ENCODE measurements at regions of chr9 and their contacts with region 1.

Region 1: GRCh38 chr9:77977210-77977611 is 54.4 kb downstream of the GNAQ start:
- DNase-seq: peak in 4 of 5 donors; percentile 37 to 53 (median 48)
- H3K4me3 ChIP-seq: peak overlapping the region in 1 of 2 donors; percentile 21
- H3K4me3 Mint-ChIP-seq: peak overlapping the region in 7 of 8 donors; percentile 3 to 73 (median 62)
- H3K27ac ChIP-seq: no peak overlapping the region
- H3K27ac Mint-ChIP-seq: peak overlapping the region; percentile 1 to 92 (median 43)
- H3K4me1 ChIP-seq: peaks cover 53% of the 10 kb centered on the region
- H3K4me1 Mint-ChIP-seq: peaks cover 42 to 73% (median 58%) of the 10 kb centered on the region in 4 donors
- H3K27me3 ChIP-seq: no peaks in the 10 kb centered on the region
- H3K27me3 Mint-ChIP-seq: no peaks in the 10 kb centered on the region

Region 2: DNA sequence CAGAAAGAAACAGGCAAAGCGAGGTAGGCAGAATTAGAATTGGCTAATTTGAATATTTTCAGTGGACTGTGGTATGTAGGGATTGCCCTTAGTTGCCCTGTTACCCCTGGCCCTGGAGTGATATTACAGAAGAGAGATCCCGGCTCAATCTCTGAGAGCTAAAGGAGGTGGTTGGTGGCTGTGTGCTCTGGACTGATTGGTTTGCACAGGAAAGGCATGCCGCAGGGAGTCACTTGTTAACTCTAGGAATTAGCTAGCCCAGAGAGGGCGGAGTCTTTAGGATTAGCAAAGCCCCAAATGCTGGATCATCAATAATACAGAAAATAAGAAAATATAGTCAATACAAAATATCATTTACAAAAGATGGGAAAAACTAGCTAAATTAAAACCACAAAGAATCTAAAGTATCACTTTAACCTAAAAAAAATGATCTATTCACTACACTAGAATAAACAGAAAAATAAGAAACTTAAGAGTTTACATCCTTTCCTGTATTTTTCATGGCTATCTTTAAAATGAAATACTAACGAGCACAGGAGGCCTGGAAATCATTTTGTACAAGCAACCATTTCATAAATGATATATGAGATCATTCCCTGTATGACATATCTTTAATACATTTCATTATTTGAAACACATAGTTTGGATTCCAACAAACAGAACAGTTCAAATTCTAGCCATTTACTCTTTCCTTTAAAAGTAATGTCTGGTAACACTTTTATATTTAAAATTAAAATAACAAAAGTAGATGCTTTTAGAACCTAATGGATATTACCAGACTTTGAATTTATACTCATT is 16.7 kb before region 1 on chr9:
- CTCF ChIA-PET with region 1: interaction called, 18 read pairs
- POLR2A ChIA-PET with region 1: no interaction called
- intact Hi-C with region 1: no loop called
- DNase-seq: no peak
- H3K4me3 ChIP-seq: no peak overlapping the region
- H3K4me3 Mint-ChIP-seq: no peak overlapping the region
- H3K27ac ChIP-seq: no peak overlapping the region
- H3K27ac Mint-ChIP-seq: no peak overlapping the region
- H3K4me1 ChIP-seq: peaks cover 27% of the 10 kb centered on the region
- H3K4me1 Mint-ChIP-seq: peaks cover 50 to 73% (median 56%) of the 10 kb centered on the region in 4 donors
- H3K27me3 ChIP-seq: no peaks in the 10 kb centered on the region
- H3K27me3 Mint-ChIP-seq: no peaks in the 10 kb centered on the region

Region 3: DNA sequence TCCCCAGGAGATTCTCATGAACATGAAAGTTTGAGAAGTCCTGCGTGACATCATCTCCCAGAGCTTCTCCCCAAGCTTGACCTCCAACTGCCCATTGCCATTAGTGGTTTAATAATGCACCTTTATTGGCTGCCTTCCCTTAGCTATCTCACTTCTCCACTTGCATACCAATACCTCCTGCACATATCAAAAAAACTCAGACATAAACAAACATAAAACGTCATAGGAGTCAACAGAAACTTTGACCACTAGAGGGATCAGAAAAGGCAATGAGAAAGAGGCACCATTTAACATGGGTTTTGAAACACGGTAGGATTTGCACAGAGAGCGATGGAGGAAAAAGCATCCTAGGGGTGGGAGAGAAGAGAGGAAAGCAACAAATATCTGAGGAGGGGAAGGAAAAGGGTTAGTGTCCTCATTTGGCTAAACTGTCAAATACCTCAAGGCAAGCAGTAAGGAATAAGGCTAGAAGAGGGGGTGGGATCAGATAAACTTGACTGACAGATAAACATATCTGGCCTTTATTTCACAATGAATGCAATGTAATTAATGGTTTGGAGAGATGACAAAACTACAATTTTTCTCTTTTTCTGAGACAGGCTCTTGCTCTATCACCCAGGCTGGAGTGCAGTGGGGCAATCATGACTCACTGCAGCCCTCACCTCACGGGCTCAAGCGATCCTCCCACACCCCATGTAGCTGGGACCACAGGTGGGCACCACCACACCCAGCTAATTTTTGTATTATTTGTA is 27.4 kb after region 1 on chr9:
- CTCF ChIA-PET with region 1: interaction called, 28 read pairs
- POLR2A ChIA-PET with region 1: no interaction called
- intact Hi-C with region 1: no loop called
- DNase-seq: peak in 2 of 5 donors; percentile 9 to 17
- H3K4me3 ChIP-seq: no peak overlapping the region
- H3K4me3 Mint-ChIP-seq: peak overlapping the region in 2 of 8 donors; percentile 4 to 22
- H3K27ac ChIP-seq: no peak overlapping the region
- H3K27ac Mint-ChIP-seq: peak overlapping the region in 3 of 7 donors; percentile 2 to 72 (median 7)
- H3K4me1 ChIP-seq: peaks cover 43% of the 10 kb centered on the region
- H3K4me1 Mint-ChIP-seq: peaks cover 36 to 80% (median 60%) of the 10 kb centered on the region in 4 donors
- H3K27me3 ChIP-seq: no peaks in the 10 kb centered on the region
- H3K27me3 Mint-ChIP-seq: no peaks in the 10 kb centered on the region

Region 4: DNA sequence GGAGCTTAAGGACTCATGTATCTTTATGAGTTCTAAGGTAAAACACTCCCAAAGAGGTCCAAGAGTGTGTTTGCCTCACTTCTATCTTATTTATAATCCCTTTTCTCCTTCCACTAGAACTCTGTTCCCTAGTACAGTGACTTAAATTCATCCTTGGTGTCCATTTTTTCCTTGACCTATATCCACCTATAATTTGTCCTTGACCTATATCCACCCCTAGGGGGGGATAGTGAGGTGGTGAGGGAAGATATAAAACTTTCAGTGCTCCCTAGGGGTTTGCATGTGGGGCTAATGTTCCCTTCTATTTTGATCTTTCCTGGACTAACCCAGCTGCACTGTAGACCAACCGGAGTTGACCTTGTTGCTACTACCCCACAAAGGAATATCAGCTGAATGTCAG is 137.9 kb after region 1 on chr9:
- CTCF ChIA-PET with region 1: interaction called, 119 read pairs
- POLR2A ChIA-PET with region 1: interaction called, 3 read pairs
- intact Hi-C with region 1: no loop called
- DNase-seq: peak in 1 of 5 donors; percentile 21
- H3K4me3 ChIP-seq: no peak overlapping the region
- H3K4me3 Mint-ChIP-seq: no peak overlapping the region
- H3K27ac ChIP-seq: no peak overlapping the region
- H3K27ac Mint-ChIP-seq: peak overlapping the region in 1 of 7 donors; percentile 40
- H3K4me1 ChIP-seq: peaks cover 52% of the 10 kb centered on the region
- H3K4me1 Mint-ChIP-seq: peaks cover 44 to 70% (median 54%) of the 10 kb centered on the region in 4 donors
- H3K27me3 ChIP-seq: no peaks in the 10 kb centered on the region
- H3K27me3 Mint-ChIP-seq: no peaks in the 10 kb centered on the region

Region 5: DNA sequence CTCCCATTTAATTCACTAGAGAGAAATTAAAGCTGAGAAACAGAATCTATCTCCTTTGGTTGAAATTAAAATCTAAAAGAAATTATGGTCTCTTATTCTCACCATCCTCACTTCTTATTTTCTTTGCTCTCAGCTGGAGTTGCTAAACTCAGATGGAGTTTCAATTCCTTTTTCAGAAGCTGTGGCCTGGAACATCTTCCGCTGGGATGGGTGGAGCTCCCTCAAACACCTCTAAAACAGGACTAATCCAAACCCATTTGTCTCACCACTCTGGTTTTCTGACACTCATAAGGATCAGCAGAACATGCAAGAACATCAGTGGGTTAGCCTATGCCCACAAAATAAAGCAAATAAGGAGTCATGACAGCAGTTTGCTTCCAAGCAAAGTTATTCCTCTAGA is 219.0 kb after region 1 on chr9:
- CTCF ChIA-PET with region 1: interaction called, 10 read pairs
- POLR2A ChIA-PET with region 1: interaction called, 4 read pairs
- intact Hi-C with region 1: no loop called
- DNase-seq: no peak
- H3K4me3 ChIP-seq: no peak overlapping the region
- H3K4me3 Mint-ChIP-seq: no peak overlapping the region
- H3K27ac ChIP-seq: no peak overlapping the region
- H3K27ac Mint-ChIP-seq: peak overlapping the region in 1 of 7 donors; percentile 10
- H3K4me1 ChIP-seq: peaks cover 17% of the 10 kb centered on the region
- H3K4me1 Mint-ChIP-seq: peaks cover 10 to 23% (median 17%) of the 10 kb centered on the region in 4 donors
- H3K27me3 ChIP-seq: no peaks in the 10 kb centered on the region
- H3K27me3 Mint-ChIP-seq: no peaks in the 10 kb centered on the region

Region 6: DNA sequence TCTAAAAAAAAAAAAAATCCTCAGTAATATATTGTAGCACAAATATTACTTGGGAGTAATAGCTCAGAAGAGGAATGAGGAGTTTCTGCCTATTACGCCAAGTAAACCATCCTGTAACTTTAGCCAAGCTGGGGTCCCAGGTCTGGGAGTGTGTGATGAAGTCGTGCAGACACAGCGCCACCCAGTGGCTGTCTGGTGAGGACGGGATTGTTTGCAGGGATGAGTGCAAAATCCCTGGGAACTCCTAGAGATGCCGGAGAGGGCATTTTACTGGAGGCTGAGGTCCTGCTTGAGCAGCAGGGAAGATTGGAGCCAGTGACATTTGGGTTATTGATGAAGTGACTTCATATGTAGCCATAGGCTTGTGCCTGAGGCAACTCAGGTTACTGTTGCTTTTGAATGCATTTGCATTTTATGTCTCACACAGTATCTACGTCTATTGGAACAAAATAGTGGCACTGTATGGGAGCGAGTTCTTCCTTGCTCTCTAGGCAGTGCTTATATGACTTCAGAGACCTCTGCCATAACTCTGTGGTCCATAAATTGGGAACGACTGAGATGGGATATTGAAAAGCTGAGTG is 392.5 kb after region 1 on chr9:
- CTCF ChIA-PET with region 1: interaction called, 21 read pairs
- POLR2A ChIA-PET with region 1: no interaction called
- intact Hi-C with region 1: no loop called
- DNase-seq: peak in 4 of 5 donors; percentile 28 to 42 (median 36)
- H3K4me3 ChIP-seq: no peak overlapping the region
- H3K4me3 Mint-ChIP-seq: no peak overlapping the region
- H3K27ac ChIP-seq: no peak overlapping the region
- H3K27ac Mint-ChIP-seq: no peak overlapping the region
- H3K4me1 ChIP-seq: no peaks in the 10 kb centered on the region
- H3K4me1 Mint-ChIP-seq: peaks cover 0 to 5% (median 1%) of the 10 kb centered on the region in 4 donors
- H3K27me3 ChIP-seq: peaks cover 7% of the 10 kb centered on the region
- H3K27me3 Mint-ChIP-seq: peaks cover 22 to 26% of the 10 kb centered on the region in 2 donors